CD14-positive monocyte (primary cell): ENCODE measurements at regions of chr15 and their contacts with region 1.

Region 1: GRCh38 chr15:63517614-63518013 is 13.2 kb downstream of the USP3 start:
- DNase-seq: no peak
- H3K4me3 ChIP-seq: peak overlapping the region in 2 of 3 experiments; percentile 7 to 37
- H3K4me3 Mint-ChIP-seq: peak overlapping the region; percentile 6 to 57
- H3K27ac ChIP-seq: peak overlapping the region; percentile 37 to 79
- H3K27ac Mint-ChIP-seq: peak overlapping the region; percentile 77 to 91 (median 83)
- H3K4me1 ChIP-seq: peaks cover 59 to 84% of the 10 kb centered on the region in 2 donors
- H3K4me1 Mint-ChIP-seq: peaks cover 89% of the 10 kb centered on the region
- H3K27me3 ChIP-seq: no peaks in the 10 kb centered on the region
- H3K27me3 Mint-ChIP-seq: peaks cover 0 to 1% (median 0%) of the 10 kb centered on the region in 3 donors
- CTCF ChIP-seq: no peak

Region 2: GRCh38 chr15:63466378-63467192 is 51.0 kb before region 1 on chr15:
- intact Hi-C with region 1: loop called in 1 of 2 experiments (anchors 10 kb)
- DNase-seq: peak; percentile 72 to 78 (median 74)
- H3K4me3 ChIP-seq: no peak overlapping the region
- H3K4me3 Mint-ChIP-seq: no peak overlapping the region
- H3K27ac ChIP-seq: no peak overlapping the region
- H3K27ac Mint-ChIP-seq: peak overlapping the region in 3 of 7 donors; percentile 42 to 79 (median 58)
- H3K4me1 ChIP-seq: peaks cover 10 to 13% of the 10 kb centered on the region in 2 donors
- H3K4me1 Mint-ChIP-seq: peaks cover 18% of the 10 kb centered on the region
- H3K27me3 ChIP-seq: no peaks in the 10 kb centered on the region
- H3K27me3 Mint-ChIP-seq: peaks cover 1 to 4% (median 3%) of the 10 kb centered on the region in 3 donors
- CTCF ChIP-seq: peak; percentile 73

Region 3: DNA sequence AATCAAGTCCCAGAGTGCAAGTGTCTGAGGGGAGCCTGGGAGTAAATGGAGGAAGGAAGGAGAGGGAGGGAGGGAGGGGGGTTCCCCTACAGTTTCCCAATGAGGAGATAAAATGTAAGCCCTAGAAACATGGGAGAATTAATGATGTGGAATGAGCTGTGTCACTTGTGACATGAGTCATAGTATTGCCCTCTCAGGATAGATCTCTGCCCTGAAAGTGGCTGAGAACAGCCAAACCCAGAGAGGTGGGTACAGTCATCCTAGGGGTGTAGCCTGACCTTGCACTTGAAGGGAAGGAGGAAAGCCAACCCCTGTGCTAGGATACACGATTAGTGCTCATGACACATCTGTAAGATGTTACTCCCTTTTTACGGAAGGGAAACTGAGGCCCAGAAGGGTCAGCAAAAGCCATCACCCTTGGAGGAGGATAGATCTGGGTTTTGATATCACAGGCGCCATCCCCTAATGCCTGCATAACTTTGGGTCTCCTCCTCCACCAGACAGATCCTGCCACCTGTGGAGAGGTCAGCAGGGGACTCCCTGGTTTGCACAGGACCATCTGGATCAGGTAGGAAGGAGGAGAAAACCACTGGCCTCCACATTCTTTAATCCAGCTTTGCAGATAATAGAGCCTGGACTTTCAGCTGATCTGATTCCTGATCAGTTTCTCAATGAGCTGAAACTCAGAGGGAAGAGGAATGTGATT is 36.4 kb before region 1 on chr15:
- intact Hi-C with region 1: loop called in 1 of 2 experiments (anchors 5 kb)
- DNase-seq: peak; percentile 86 to 94 (median 94)
- H3K4me3 ChIP-seq: peak overlapping the region in 1 of 3 experiments; percentile 38
- H3K4me3 Mint-ChIP-seq: no peak overlapping the region
- H3K27ac ChIP-seq: peak overlapping the region; percentile 83 to 89
- H3K27ac Mint-ChIP-seq: peak overlapping the region; percentile 92 to 99 (median 97)
- H3K4me1 ChIP-seq: peaks cover 70 to 76% of the 10 kb centered on the region in 2 donors
- H3K4me1 Mint-ChIP-seq: peaks cover 69% of the 10 kb centered on the region
- H3K27me3 ChIP-seq: no peaks in the 10 kb centered on the region
- H3K27me3 Mint-ChIP-seq: no peaks in the 10 kb centered on the region
- CTCF ChIP-seq: no peak

Region 4: DNA sequence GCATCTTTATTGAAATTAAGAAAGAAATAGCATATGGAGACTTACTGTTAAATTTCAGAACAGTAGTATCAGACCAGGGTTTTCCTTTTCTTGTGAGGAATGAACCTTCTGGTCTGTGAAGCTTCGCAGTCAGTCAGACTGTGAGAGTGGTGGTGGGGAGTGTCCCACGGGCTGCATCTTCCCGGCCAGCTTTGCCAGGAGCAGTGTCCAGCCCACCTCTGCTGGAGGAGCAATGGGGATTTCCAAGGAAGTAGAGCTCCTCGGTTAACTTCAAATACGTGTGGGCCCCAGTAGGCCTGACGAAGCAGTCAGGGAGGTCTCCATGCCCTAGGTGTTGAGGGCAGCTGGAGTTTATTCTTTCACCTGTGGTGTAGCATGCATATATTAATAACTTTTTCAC is 38.6 kb after region 1 on chr15:
- intact Hi-C with region 1: loop called in 1 of 2 experiments (anchors 5 kb)
- DNase-seq: no peak
- H3K4me3 ChIP-seq: no peak overlapping the region
- H3K4me3 Mint-ChIP-seq: no peak overlapping the region
- H3K27ac ChIP-seq: peak overlapping the region in 1 of 2 donors; percentile 12
- H3K27ac Mint-ChIP-seq: peak overlapping the region in 1 of 7 donors; percentile 26
- H3K4me1 ChIP-seq: no peaks in the 10 kb centered on the region
- H3K4me1 Mint-ChIP-seq: peaks cover 4% of the 10 kb centered on the region
- H3K27me3 ChIP-seq: no peaks in the 10 kb centered on the region
- H3K27me3 Mint-ChIP-seq: no peaks in the 10 kb centered on the region
- CTCF ChIP-seq: no peak

Region 5: DNA sequence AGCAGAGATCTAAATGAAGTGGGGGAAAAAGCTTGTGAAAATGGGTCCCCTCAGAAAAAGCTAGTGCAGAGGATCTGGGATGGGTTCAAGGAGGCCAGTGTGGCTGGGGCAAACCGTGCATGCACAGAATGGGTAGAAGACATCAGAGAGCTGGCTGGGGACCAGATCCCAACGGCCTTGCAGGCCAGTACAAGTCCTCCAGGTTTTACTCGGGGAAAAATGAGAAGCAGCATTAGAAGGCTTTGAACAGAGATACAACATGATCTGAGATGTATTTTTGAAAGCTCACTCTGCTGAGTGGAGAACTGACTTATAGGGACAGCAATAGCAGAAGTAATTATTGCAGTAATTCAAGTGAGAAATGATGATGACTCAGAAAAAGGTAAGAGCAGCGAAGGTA is 201.7 kb after region 1 on chr15:
- intact Hi-C with region 1: no loop called
- DNase-seq: no peak
- H3K4me3 ChIP-seq: no peak overlapping the region
- H3K4me3 Mint-ChIP-seq: no peak overlapping the region
- H3K27ac ChIP-seq: no peak overlapping the region
- H3K27ac Mint-ChIP-seq: peak overlapping the region in 3 of 7 donors; percentile 23 to 38 (median 37)
- H3K4me1 ChIP-seq: no peaks in the 10 kb centered on the region
- H3K4me1 Mint-ChIP-seq: peaks cover 3% of the 10 kb centered on the region
- H3K27me3 ChIP-seq: no peaks in the 10 kb centered on the region
- H3K27me3 Mint-ChIP-seq: no peaks in the 10 kb centered on the region
- CTCF ChIP-seq: no peak